ENCODE measurements at regions of chr17 and their contacts with region 1.

Region 1: DNA sequence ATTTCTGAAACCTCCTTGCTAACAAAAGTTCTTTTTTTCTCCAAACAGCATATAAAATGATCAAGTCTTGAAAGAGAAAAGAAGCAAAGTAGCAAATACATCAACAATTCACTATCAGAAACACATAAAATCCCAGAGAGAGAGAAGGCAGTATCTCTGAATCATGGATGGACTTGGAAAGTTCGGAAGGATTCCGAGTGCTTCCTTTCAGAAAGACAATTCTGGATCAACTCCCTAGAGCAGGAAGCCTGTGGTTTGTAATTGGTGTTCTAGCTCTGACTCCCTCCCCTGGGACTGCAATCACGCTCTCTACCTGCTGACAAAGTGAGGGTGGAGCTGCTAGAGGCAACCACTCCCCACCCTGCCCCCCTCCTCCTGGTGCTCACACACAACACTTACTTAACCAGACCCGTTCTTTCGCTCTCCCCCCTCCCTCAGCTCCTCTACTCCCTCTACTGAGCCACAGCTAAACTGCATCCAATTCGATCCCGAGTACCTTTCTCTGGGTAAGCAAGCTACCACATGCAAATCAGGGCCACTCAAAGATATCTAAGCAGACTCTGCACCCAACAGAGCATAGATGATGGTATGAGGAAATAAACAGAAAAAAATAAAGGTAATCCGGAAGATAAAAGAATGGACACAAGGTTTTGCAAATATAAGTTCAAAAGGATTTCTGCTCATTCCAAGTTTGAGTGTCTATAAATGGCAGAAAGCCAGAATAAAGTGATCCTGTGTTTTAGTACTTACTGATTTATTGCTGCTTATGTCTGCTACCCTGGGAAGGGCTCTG is at the start of gene RNF43:
- DNase-seq: peak; percentile 91
- ATAC-seq: peak; percentile 99
- H3K4me3 Mint-ChIP-seq: no peak within 1 kb of the TSS
- H3K27ac Mint-ChIP-seq: no peak within 1 kb of the TSS
- H3K4me1 Mint-ChIP-seq: peaks cover 21% of the 10 kb centered on the region
- H3K27me3 Mint-ChIP-seq: no peaks in the 10 kb centered on the region
- total RNA-seq, gene RNF43: 0.05 TPM in 1 of 2 experiments, not detected in the other

Region 2: DNA sequence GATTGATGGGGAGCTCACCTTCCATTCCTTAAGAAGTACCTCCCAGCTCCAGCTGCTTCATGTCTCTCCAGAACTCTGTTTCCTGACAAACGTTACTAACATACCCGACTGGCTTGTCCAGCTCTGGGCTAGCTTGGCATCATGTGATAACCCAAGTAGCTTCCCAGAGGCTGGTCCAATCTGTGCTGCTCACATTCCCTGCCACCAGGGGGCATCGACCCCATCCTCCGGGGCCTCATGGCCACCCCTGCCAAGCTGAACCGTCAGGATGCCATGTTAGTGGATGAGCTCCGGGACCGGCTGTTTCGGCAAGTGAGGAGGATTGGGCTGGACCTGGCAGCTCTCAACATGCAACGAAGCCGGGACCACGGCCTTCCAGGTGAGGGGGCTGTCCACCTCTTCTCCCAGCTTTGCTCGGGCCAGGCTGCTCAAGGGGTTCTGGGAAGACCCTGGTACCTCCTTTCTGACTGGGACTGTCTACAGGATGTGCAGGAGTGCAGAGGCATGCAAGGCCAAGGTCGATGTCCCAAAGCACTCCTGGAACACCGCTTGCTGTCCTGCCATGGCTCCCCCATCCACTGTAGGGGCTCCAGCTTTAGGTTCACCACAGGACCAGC is 217.4 kb before region 1 on chr17:
- CTCF ChIA-PET with region 1: interaction called, 10 read pairs
- POLR2A ChIA-PET with region 1: no interaction called
- DNase-seq: peak; percentile 68
- ATAC-seq: peak; percentile 92
- H3K4me3 Mint-ChIP-seq: no peak overlapping the region
- H3K27ac Mint-ChIP-seq: no peak overlapping the region
- H3K4me1 Mint-ChIP-seq: no peaks in the 10 kb centered on the region
- H3K27me3 Mint-ChIP-seq: peaks cover 4% of the 10 kb centered on the region

Region 3: DNA sequence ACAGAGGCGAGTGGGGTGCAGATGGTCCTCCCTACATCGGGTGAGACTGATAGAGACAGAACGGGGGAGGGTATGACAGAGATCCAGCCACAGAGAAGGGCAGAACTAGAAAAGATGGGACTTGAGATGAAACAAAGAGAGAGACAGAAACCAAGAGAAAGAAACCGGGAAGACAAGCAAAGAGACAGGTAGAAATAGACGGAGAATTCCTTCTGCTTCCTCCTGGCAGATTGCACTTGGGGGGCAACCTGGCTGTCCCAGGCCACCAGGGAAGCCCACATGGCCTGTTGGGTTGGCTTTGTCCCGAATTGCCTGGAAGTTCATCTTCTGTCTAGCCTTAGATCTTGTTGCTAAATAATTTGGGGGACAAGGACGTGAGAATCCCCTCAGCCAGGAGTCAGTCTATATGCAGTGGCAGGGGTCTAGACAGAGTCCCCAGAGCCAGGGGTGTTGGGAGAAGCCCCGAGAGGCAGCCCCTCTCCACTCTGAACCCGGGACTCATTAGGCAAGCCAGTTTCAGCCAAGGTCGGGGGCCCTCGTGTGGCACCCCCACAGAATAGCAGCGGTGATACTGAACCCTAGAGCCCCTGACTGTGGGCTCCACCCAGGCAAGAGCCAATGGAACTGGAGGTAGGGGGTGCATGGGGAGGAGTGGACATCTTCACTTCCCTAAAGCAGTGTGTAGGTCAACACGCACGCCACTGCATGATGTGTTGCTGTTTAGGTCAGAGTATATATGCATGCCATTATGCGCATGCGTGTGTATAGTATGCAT is 88.3 kb before region 1 on chr17:
- CTCF ChIA-PET with region 1: interaction called, 7 read pairs
- POLR2A ChIA-PET with region 1: interaction called, 13 read pairs
- DNase-seq: peak; percentile 90
- ATAC-seq: peak; percentile 18
- H3K4me3 Mint-ChIP-seq: peak overlapping the region; percentile 99
- H3K27ac Mint-ChIP-seq: peak overlapping the region; percentile 92
- H3K4me1 Mint-ChIP-seq: peaks cover 42% of the 10 kb centered on the region
- H3K27me3 Mint-ChIP-seq: peaks cover 12% of the 10 kb centered on the region

Region 4: DNA sequence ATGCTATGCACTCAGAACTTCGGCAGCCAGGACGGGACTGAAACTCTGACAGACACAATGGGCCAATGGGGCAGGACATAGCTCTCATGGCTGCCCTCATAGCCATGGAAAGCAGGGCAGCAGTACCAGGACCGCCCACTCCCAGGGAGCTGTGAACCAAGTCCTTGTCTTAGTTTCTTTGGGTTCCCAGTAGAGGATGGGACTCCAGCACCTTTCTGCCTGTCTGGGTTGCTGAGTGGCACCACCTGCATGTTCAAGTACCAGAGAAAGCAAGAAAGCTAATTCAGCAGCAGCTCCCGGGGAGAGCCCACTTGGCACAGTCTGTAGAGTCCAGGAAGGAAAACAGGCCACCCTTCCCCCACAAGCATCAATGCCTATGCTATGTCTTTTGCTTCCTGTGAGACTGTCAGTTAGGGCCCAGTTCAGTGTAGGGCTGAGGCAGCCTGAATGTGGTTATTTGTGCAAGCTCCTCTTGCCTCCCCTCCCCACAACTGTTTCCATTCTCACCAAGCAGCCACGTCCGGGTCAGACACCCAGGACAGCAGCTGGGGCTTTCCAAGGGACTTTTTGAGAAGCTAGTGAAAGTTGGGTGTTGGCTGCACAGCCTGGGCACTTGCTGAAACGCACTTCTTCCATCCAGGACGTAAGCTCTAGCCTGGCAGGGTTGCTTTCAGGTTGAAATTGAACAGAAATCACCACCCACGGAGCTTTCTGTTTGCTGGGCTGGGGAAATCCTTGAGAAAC is 73.3 kb before region 1 on chr17:
- CTCF ChIA-PET with region 1: interaction called, 15 read pairs
- POLR2A ChIA-PET with region 1: interaction called, 17 read pairs
- DNase-seq: peak; percentile 91
- ATAC-seq: peak; percentile 76
- H3K4me3 Mint-ChIP-seq: peak overlapping the region; percentile 99
- H3K27ac Mint-ChIP-seq: peak overlapping the region; percentile 92
- H3K4me1 Mint-ChIP-seq: peaks cover 82% of the 10 kb centered on the region
- H3K27me3 Mint-ChIP-seq: no peaks in the 10 kb centered on the region

Region 5: GRCh38 chr17:58364270-58364942 is 53.1 kb before region 1 on chr17:
- CTCF ChIA-PET with region 1: interaction called, 11 read pairs
- POLR2A ChIA-PET with region 1: interaction called, 5 read pairs
- DNase-seq: no peak
- ATAC-seq: no peak
- H3K4me3 Mint-ChIP-seq: no peak overlapping the region
- H3K27ac Mint-ChIP-seq: no peak overlapping the region
- H3K4me1 Mint-ChIP-seq: no peaks in the 10 kb centered on the region
- H3K27me3 Mint-ChIP-seq: no peaks in the 10 kb centered on the region

Region 6: DNA sequence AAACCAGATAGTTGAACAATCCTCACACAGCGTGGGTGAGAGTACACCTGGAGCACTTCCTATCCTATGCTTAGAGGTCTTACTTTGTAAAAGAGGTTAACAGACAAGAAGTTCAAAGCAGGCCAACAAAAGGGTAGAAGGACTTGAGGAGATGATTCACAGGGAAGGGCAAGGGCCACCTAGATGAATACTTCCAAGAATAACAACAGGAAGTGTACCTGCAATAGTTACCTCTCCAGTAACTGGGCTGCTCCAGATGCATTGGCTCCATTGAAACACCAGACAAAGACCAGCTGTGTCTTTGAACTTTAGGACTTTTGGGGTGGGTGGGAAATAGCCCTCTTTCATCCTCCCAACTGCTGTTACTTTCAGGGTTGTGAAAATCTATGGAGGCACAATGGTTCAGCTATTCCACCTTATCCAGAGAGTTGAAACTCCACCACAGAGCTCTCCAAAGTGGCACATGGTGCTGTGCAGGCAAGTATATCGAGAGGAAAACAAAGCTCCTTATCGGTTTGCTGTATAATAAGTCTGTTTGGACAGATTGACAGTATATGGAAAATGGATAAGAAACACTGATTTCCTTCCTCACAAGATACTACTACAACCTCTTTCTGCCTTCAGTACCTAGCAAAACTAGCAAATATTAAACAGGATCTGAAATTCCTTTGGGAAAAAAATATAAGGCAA is 22.8 kb before region 1 on chr17:
- CTCF ChIA-PET with region 1: interaction called, 14 read pairs
- POLR2A ChIA-PET with region 1: interaction called, 3 read pairs
- DNase-seq: no peak
- ATAC-seq: no peak
- H3K4me3 Mint-ChIP-seq: no peak overlapping the region
- H3K27ac Mint-ChIP-seq: no peak overlapping the region
- H3K4me1 Mint-ChIP-seq: peaks cover 2% of the 10 kb centered on the region
- H3K27me3 Mint-ChIP-seq: peaks cover 4% of the 10 kb centered on the region

Region 7: GRCh38 chr17:58468944-58469343 is 51.4 kb after region 1 on chr17:
- CTCF ChIA-PET with region 1: no interaction called
- POLR2A ChIA-PET with region 1: no interaction called
- DNase-seq: no peak
- ATAC-seq: no peak
- H3K4me3 Mint-ChIP-seq: no peak overlapping the region
- H3K27ac Mint-ChIP-seq: no peak overlapping the region
- H3K4me1 Mint-ChIP-seq: no peaks in the 10 kb centered on the region
- H3K27me3 Mint-ChIP-seq: no peaks in the 10 kb centered on the region